ENCODE measurements at regions of chr3 and their contacts with region 1.

Region 1: GRCh38 chr3:159609625-159610024 is 379.0 kb upstream of the IL12A start:
- DNase-seq: no peak
- H3K4me3 ChIP-seq: no peak overlapping the region
- H3K27ac ChIP-seq: no peak overlapping the region
- H3K4me1 ChIP-seq: no peaks in the 10 kb centered on the region
- H3K27me3 ChIP-seq: no peaks in the 10 kb centered on the region
- CTCF ChIP-seq: no peak
- EP300 ChIP-seq: no peak
- POLR2A ChIP-seq: no peak

Region 2: GRCh38 chr3:159593927-159594605 is 15.6 kb before region 1 on chr3:
- in situ Hi-C with region 1: no loop called
- intact Hi-C with region 1: no loop called
- DNase-seq: no peak
- H3K4me3 ChIP-seq: no peak overlapping the region
- H3K27ac ChIP-seq: no peak overlapping the region
- H3K4me1 ChIP-seq: no peaks in the 10 kb centered on the region
- H3K27me3 ChIP-seq: no peaks in the 10 kb centered on the region
- CTCF ChIP-seq: no peak
- EP300 ChIP-seq: no peak
- POLR2A ChIP-seq: no peak

Region 3: GRCh38 chr3:159757341-159758060 is 147.9 kb after region 1 on chr3:
- in situ Hi-C with region 1: no loop called
- intact Hi-C with region 1: loop called (anchors 5 kb)
- DNase-seq: no peak
- H3K4me3 ChIP-seq: no peak overlapping the region
- H3K27ac ChIP-seq: no peak overlapping the region
- H3K4me1 ChIP-seq: peaks cover 0 to 9% (median under 1%) of the 10 kb centered on the region in 4 donors
- H3K27me3 ChIP-seq: no peaks in the 10 kb centered on the region
- CTCF ChIP-seq: no peak
- EP300 ChIP-seq: no peak
- POLR2A ChIP-seq: no peak